ENCODE measurements at regions of chr11 and their contacts with region 1.

Region 1: DNA sequence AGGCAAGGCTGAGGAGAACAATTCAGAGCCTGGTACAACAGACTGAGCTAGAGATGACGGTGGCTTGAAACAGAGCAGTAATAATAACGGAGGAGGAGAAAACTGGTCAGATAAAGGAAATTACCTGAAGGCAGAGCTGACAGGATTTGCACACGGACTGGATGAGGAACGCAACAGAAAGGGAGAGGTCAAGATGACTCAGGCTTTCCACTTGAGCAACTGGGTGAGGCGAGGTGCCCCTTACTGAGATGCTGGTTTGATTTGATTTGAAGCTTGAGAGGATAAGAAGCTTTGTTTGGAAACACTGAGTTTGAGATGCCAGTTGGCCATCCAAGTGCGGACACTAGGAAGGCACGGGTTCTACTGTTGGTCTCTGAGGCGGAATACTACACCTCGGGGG is 35.4 kb upstream of the NRIP3 start:
- DNase-seq: no peak
- H3K4me3 ChIP-seq: no peak overlapping the region
- H3K27ac ChIP-seq: no peak overlapping the region
- H3K4me1 ChIP-seq: no peaks in the 10 kb centered on the region
- H3K27me3 ChIP-seq: no peaks in the 10 kb centered on the region
- CTCF ChIP-seq: no peak
- POLR2A ChIP-seq: no peak

Region 2: DNA sequence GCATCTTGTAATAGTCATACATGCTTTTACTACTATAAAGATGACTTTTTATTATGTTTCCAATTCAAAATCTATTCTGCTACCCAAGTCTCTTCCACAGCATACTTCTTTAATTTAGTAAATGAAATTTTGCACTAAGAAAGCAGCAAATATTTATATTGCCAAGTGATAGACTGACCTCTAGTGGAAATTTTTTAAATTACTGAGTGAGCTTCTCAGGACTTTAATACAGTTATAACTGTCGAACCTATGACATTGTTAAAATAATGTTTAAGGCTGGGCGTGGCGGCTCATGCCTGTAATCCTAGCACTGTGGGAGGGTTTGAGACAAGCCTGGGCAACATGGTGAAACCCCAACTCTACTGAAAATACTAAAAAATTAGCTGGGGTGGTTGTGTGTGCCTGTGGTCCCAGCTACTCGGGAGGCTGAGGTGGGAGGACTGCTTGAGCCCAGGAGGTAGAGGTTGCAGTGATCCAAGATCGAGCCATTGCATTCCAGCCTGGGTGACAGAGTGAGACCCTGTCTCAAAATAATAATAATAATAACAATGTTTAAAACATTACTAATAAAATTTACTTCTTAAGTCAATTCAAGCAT is 472.5 kb before region 1 on chr11:
- intact Hi-C with region 1: no loop called
- DNase-seq: no peak
- H3K4me3 ChIP-seq: no peak overlapping the region
- H3K27ac ChIP-seq: no peak overlapping the region
- H3K4me1 ChIP-seq: no peaks in the 10 kb centered on the region
- H3K27me3 ChIP-seq: no peaks in the 10 kb centered on the region
- CTCF ChIP-seq: peak; percentile 41 to 68 (median 44)
- POLR2A ChIP-seq: no peak

Region 3: DNA sequence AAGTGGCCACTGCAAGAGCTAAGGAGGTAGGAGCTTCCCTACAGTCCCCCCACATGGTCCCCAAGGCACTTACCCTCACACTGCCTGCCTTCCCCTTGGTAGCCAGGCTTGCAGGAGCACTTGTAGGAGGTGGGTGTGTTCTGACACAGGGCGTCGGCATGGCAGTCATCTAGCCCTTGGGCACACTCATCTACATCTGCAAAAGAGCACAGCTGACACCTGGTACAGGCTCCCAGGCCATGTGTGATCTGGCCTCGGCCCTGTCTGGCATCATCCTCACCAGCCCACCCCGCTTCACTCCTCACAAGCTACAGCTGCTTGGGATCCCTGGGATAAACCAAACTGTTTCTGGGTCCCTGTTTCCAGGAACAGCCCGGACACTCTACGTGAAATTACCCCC is 50.4 kb after region 1 on chr11:
- intact Hi-C with region 1: loop called (anchors 10 kb)
- DNase-seq: no peak
- H3K4me3 ChIP-seq: no peak overlapping the region
- H3K27ac ChIP-seq: no peak overlapping the region
- H3K4me1 ChIP-seq: no peaks in the 10 kb centered on the region
- H3K27me3 ChIP-seq: no peaks in the 10 kb centered on the region
- CTCF ChIP-seq: no peak
- POLR2A ChIP-seq: no peak

Measured in testis (tissue), 5 donors.